AG04450 (cell line): ENCODE measurements at regions of chr2 and their contacts with region 1.

Region 1: DNA sequence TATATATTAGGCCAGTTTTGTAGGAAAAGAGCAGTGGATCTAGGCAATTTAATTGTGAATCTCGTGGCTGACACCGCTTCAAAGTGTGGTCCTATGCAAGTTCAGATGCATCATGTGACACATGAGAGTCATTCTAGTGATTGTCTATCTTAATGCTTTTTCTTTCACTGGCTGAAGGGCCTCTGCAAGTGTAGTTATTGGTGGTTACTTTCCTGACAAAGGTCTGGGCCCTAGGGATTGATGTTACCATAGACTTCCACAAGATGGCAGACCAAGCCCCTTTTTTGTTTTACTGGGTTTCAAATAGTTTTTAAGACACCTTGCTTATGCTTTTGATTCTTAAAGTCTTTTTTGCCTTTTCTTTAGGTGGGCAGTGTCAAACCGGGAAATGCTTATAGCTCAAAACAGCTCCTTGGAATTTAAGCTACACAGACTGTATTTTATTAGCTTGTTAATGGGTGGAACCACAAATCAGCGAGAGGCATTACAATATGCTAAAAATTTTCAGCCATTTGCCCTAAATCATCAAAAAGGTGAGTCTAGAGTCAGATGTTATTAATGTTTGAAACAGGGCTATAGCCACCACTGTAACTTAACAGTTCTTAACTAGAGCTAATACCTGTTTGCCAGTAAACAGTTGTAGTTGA is 25.9 kb downstream of the CD8A start:
- DNase-seq: peak; percentile 15
- H3K4me3 ChIP-seq: no peak overlapping the region
- H3K27ac ChIP-seq: no peak overlapping the region
- H3K27me3 ChIP-seq: no peaks in the 10 kb centered on the region
- CTCF ChIP-seq: peak; percentile 77

Region 2: DNA sequence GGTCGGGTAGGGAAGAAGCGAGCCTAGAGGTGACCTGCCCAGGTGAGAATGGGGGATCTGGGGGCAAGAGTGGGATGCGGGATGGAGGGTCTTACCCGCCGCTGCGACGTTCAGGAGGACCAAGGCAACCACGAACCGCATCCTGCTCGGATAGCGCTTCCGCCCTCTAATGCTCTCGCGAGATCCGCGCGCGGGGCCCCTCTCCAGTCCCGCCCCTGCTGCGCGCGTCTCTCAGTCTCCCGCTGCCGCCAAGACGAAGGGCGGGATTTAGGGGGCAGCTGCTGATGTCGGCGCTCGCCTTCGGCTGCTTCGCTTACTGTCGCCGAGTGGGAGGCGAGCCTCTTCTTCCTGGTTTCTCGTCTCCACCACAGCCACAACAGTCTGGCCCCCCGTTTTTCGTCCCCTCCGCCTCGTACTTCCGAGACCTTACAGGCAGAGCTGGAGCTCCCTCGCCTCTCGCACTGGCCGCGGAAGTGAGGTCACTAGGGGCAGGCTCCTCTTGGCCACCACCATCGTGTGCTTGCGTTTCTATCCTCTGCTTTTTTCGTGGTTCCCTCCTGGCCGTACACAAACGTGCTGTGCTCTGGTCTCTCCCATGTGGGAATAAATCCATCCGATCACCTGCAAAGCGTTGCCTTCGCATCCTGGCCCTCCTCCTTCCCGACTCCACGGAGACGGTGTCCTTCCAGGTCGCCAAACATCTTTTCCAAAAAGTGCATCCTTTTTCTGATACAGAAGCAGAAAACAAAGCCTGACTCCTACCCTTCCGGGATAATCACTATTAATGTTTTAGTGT is 1436.8 kb before region 1 on chr2 and contains the start of gene TGOLN2:
- CTCF ChIA-PET with region 1: no interaction called
- POLR2A ChIA-PET with region 1: no interaction called
- DNase-seq: peak; percentile 66
- H3K4me3 ChIP-seq: peak within 1 kb of the TSS; percentile 82
- H3K27ac ChIP-seq: peak within 1 kb of the TSS; percentile 80
- H3K27me3 ChIP-seq: no peaks in the 10 kb centered on the region
- CTCF ChIP-seq: no peak; the same call in 1 of the 2 replicates
- polyA plus RNA-seq, gene TGOLN2: 121 and 155 TPM in 2 replicates

Region 3: DNA sequence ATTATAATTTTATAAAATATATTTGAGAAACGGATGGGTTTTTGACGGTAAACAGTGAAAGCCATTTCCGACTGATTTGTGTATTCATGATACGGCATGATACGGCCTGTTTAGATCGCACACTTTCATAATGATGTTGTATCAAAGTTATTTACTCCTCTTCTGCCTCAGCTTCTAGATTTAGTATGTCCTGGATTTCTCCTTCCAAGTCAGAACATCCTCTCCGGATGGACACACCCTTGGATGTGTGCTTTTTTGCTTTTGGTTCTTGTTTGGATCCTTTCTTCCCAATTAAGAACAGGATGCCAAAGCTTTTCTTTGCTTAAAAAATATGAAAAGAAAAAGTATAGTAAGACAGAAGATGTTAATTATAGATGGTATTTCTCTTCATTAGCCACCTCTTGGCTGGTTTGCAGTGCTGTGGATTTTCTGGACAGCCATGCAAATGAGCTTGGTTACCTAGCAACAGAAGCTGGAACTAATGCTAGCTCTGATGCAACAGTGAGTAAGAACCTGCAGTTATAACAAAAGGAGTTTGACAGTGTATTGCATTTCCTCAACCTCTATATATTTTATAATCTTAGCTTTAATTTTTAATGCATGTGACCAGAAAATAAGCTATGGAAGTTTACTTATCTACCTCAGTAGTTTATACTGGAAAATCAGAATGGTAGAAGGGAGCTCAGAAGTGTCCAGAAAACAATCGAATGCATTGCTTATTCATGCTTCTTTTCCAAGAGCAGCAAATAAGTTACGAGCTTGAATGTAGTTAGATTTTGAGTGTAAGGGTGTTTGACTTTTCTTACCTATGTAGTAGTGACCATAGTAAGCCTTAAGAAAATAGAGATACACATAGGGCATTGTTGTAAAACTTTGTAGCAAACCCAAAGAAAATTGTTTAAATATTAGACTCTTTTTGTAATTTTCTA is 16.8 kb before region 1 on chr2:
- CTCF ChIA-PET with region 1: interaction called, 51 read pairs
- POLR2A ChIA-PET with region 1: no interaction called
- DNase-seq: peak; percentile 53
- H3K4me3 ChIP-seq: no peak overlapping the region
- H3K27ac ChIP-seq: no peak overlapping the region
- H3K27me3 ChIP-seq: no peaks in the 10 kb centered on the region
- CTCF ChIP-seq: no peak

Region 4: GRCh38 chr2:86778957-86779356 is 14.2 kb after region 1 on chr2:
- CTCF ChIA-PET with region 1: interaction called, 13 read pairs
- POLR2A ChIA-PET with region 1: no interaction called
- DNase-seq: no peak
- H3K4me3 ChIP-seq: no peak overlapping the region
- H3K27ac ChIP-seq: no peak overlapping the region
- H3K27me3 ChIP-seq: peaks cover 7% of the 10 kb centered on the region
- CTCF ChIP-seq: no peak

Region 5: GRCh38 chr2:86790676-86791572 is 26.1 kb after region 1 on chr2 and contains the start of gene CD8A:
- CTCF ChIA-PET with region 1: no interaction called
- POLR2A ChIA-PET with region 1: no interaction called
- DNase-seq: no peak
- H3K4me3 ChIP-seq: no peak within 1 kb of the TSS
- H3K27ac ChIP-seq: no peak within 1 kb of the TSS
- H3K27me3 ChIP-seq: peaks cover 63% of the 10 kb centered on the region
- CTCF ChIP-seq: no peak
- polyA plus RNA-seq, gene CD8A: not detected in 2 replicates

Region 6: DNA sequence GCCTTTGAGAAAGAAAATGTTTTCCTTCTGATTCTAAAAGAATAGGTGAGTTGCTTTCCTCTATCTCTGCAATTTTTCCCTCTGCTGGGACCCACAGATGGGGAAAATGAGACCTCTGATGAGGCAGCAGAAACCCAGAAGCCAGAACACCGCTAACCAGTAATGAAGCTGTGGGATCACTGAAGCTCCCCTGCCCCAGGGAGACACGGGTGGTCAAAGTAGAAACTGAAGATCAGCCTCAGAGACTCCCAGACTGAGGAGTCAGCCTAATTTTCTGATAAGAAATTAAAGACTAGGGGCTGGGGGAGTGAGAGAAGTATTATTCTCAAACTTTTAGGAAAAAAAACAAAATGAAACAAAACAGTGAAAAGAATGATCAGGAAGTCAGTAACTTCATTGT is 66.8 kb after region 1 on chr2:
- CTCF ChIA-PET with region 1: no interaction called
- POLR2A ChIA-PET with region 1: no interaction called
- DNase-seq: no peak
- H3K4me3 ChIP-seq: no peak overlapping the region
- H3K27ac ChIP-seq: no peak overlapping the region
- H3K27me3 ChIP-seq: peaks cover 3% of the 10 kb centered on the region
- CTCF ChIP-seq: no peak